ENCODE measurements at regions of chr12 and their contacts with region 1.

Region 1: DNA sequence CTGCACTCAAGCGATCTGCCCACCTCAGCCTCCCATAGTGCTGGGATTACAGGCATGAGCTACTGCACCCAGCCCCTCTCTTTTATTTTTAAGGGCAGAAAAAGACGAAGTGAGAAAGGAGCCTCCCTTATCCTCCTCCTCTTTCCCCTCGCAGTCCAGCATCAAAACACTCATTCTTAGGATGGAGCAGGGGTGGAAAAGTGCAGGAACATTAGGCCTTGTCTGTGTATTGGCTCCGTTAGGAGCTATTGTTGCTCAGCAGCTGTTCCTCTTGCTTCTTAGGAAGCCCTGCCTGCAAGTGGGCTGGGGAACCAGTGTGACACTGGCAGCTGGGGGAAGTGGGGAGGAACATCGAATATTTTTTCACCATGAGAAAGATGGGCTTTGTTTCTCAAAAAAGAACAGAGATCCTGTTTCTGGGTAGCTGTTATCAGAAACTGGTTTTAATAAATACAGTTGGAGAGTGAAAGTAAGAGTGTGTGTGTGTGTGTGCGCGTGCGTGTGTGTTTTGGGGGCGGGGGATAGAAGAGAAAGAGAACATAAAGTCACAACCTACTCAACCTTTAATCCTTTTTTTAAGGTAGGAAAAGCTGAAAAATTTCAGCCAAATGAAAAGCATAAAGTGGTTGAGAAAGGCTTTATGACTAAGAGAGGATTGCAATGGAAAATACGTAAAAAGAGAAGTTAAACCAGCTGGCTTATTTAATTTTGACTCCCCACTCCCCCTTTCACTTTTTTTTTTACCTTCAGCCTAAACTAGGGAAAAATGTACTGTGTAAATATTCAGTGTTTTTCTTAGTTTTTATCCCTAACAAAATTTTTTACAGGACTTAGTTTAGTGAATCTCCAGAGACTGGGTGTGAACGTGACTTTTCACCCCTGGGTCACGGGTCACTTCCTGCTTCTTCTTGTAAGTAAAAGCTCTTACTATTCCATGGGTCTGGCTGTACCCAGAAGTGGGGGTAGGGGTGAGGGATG is 197.2 kb upstream of the PLEKHG7 start:
- DNase-seq: peak; percentile 76 to 79
- ATAC-seq: peak; percentile 70
- H3K4me3 ChIP-seq: no peak overlapping the region
- H3K27ac ChIP-seq: peak overlapping the region; percentile 2 to 7
- H3K4me1 ChIP-seq: peaks cover 0 to 2% of the 10 kb centered on the region in 2 donors
- H3K27me3 ChIP-seq: no peaks in the 10 kb centered on the region

Region 2: DNA sequence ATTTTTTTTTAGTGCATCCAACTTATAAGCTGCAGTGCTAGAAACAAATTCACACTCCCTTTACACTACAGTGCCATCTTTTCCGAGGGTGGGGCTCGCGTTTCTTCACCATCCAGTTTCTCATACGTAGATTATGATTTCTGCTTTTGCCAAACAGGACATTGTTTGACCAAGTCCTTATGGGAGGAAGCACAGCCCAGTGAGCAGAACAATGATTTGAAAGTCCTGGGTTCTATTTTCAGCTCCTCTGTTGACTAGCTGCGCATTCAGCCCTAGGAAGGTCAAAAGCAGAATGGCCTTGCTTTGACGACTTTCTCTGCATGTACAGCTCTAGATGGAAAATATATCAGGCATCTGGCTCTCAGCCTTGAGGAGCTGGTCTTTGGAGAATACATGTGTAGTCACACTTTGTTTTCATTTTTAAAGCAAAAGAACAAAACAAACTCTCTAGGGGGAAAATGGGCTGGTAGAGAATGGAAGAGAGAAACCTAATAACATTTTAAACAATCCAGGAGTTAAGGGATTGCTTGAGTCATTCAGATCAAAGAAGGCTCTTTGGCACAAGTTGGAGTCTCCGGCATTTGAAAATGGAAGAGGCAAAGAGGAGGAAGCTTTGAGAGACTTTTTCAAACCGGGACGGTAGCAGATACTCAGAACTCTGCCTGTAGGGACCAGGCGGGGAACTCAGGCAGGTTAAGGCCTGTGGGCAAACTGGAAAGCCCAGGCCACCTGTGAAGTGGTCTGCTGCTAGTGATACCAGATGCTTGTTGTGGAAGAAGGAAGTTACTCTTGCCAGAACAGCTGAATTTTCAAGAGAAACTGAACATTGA is 60.1 kb before region 1 on chr12:
- intact Hi-C with region 1: no loop called
- DNase-seq: no peak
- ATAC-seq: no peak
- H3K4me3 ChIP-seq: no peak overlapping the region
- H3K27ac ChIP-seq: no peak overlapping the region
- H3K4me1 ChIP-seq: no peaks in the 10 kb centered on the region
- H3K27me3 ChIP-seq: no peaks in the 10 kb centered on the region

Region 3: GRCh38 chr12:92469837-92470236 is 35.7 kb before region 1 on chr12:
- intact Hi-C with region 1: loop called in 1 of 2 experiments (anchors 2 kb)
- DNase-seq: peak in 1 of 2 donors; percentile 68
- ATAC-seq: peak; percentile 50
- H3K4me3 ChIP-seq: no peak overlapping the region
- H3K27ac ChIP-seq: no peak overlapping the region
- H3K4me1 ChIP-seq: peaks cover 0 to 3% of the 10 kb centered on the region in 2 donors
- H3K27me3 ChIP-seq: no peaks in the 10 kb centered on the region

Region 4: GRCh38 chr12:92561543-92561899 is 56.0 kb after region 1 on chr12:
- intact Hi-C with region 1: loop called (anchors 5 kb)
- DNase-seq: peak in 1 of 2 donors; percentile 53
- ATAC-seq: peak; percentile 82
- H3K4me3 ChIP-seq: no peak overlapping the region
- H3K27ac ChIP-seq: no peak overlapping the region
- H3K4me1 ChIP-seq: peaks cover 2 to 13% of the 10 kb centered on the region in 2 donors
- H3K27me3 ChIP-seq: no peaks in the 10 kb centered on the region

Measured in aorta (tissue), 5 donors.